ENCODE measurements at regions of chrX and their contacts with region 1.

Region 1: DNA sequence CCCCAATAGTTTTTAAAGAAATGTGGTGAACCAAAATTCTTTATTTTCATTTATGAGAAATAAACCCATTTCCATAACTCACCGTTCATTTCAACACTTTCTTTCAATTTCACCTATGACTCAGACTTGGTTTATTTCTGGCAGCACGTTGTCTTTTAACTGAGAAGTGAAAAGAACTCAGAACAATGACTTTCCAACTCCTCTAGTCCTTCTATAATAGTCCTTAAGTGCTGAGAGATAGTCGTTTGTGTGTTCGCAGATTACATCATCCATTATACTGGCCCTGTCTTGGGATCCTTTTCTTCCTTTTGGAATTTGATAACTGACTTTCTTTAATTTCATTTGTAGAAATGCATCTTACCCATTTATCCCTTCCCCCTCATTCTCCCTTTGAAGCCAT is 113.6 kb downstream of the GLUD2 start:
- DNase-seq: no peak
- ATAC-seq: peak; percentile 79
- H3K4me3 Mint-ChIP-seq: peak overlapping the region; percentile 50
- H3K27ac Mint-ChIP-seq: peak overlapping the region; percentile 89
- H3K4me1 Mint-ChIP-seq: peaks cover 46% of the 10 kb centered on the region
- H3K27me3 Mint-ChIP-seq: peaks cover 3% of the 10 kb centered on the region

Region 2: DNA sequence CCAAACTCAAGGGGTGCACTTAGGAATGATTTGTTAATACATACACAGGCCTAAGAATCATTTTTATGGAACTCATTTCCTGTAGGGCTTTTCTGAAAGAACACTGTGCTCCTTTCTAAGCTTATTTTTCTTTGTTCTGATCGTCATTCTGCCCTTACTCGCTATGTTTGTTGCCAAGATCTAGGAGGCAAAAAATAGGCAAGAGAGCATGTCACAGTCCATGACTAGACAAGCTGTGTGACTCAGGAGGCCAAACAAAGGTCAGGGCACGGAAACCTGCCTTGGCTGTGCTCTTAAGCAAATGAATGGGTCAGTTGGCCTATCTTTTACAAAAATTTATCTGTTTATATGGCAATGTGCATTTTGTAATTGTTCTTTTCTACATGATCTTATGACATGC is 488.6 kb before region 1 on chrX:
- CTCF ChIA-PET with region 1: no interaction called
- POLR2A ChIA-PET with region 1: no interaction called
- intact Hi-C with region 1: loop called in 1 of 2 experiments (anchors 5 kb)
- DNase-seq: no peak
- ATAC-seq: no peak
- H3K4me3 Mint-ChIP-seq: no peak overlapping the region
- H3K27ac Mint-ChIP-seq: no peak overlapping the region
- H3K4me1 Mint-ChIP-seq: peaks cover 20% of the 10 kb centered on the region
- H3K27me3 Mint-ChIP-seq: no peaks in the 10 kb centered on the region

Region 3: GRCh38 chrX:120736989-120737388 is 424.0 kb before region 1 on chrX:
- CTCF ChIA-PET with region 1: no interaction called
- POLR2A ChIA-PET with region 1: no interaction called
- intact Hi-C with region 1: loop called in 1 of 2 experiments (anchors 5 kb)
- DNase-seq: no peak
- ATAC-seq: peak; percentile 89
- H3K4me3 Mint-ChIP-seq: no peak overlapping the region
- H3K27ac Mint-ChIP-seq: peak overlapping the region; percentile 74
- H3K4me1 Mint-ChIP-seq: peaks cover 23% of the 10 kb centered on the region
- H3K27me3 Mint-ChIP-seq: no peaks in the 10 kb centered on the region

Region 4: GRCh38 chrX:120797188-120797851 is 363.7 kb before region 1 on chrX:
- CTCF ChIA-PET with region 1: no interaction called
- POLR2A ChIA-PET with region 1: no interaction called
- intact Hi-C with region 1: loop called (anchors 5 kb)
- DNase-seq: no peak
- ATAC-seq: peak; percentile 76
- H3K4me3 Mint-ChIP-seq: no peak overlapping the region
- H3K27ac Mint-ChIP-seq: peak overlapping the region; percentile 86
- H3K4me1 Mint-ChIP-seq: peaks cover 79% of the 10 kb centered on the region
- H3K27me3 Mint-ChIP-seq: no peaks in the 10 kb centered on the region

Region 5: DNA sequence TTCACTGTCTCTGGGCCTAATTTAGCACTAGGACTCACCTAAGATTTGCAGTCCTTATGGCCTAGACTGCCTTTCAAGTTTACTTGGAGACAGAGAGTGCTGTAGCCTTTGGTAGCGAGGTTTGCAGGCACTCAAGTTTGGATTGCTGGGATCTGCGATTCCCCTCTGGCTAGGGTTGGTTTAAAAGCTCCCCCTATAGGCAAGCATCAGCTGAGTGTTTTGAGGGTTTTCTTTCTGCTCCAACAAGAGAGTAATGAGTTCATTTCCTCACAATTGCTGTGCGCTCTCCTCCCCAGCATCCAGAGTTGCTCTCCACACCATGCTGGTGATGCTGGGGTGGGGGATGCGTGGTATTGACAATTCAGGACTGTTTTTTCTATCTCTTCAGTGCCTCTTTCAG is 93.3 kb after region 1 on chrX:
- CTCF ChIA-PET with region 1: no interaction called
- POLR2A ChIA-PET with region 1: no interaction called
- intact Hi-C with region 1: loop called in 1 of 2 experiments (anchors 10 kb)
- DNase-seq: no peak
- ATAC-seq: no peak
- H3K4me3 Mint-ChIP-seq: no peak overlapping the region
- H3K27ac Mint-ChIP-seq: no peak overlapping the region
- H3K4me1 Mint-ChIP-seq: peaks cover 16% of the 10 kb centered on the region
- H3K27me3 Mint-ChIP-seq: no peaks in the 10 kb centered on the region